ENCODE measurements at regions of chr2 and their contacts with region 1.

Region 1: GRCh38 chr2:7788736-7789135 is 871.5 kb downstream of the RNF144A start:
- DNase-seq: no peak
- H3K4me3 ChIP-seq: no peak overlapping the region
- H3K27ac ChIP-seq: no peak overlapping the region
- H3K4me1 ChIP-seq: no peaks in the 10 kb centered on the region
- H3K27me3 ChIP-seq: no peaks in the 10 kb centered on the region
- CTCF ChIP-seq: no peak
- POLR2A ChIP-seq: no peak

Region 2: DNA sequence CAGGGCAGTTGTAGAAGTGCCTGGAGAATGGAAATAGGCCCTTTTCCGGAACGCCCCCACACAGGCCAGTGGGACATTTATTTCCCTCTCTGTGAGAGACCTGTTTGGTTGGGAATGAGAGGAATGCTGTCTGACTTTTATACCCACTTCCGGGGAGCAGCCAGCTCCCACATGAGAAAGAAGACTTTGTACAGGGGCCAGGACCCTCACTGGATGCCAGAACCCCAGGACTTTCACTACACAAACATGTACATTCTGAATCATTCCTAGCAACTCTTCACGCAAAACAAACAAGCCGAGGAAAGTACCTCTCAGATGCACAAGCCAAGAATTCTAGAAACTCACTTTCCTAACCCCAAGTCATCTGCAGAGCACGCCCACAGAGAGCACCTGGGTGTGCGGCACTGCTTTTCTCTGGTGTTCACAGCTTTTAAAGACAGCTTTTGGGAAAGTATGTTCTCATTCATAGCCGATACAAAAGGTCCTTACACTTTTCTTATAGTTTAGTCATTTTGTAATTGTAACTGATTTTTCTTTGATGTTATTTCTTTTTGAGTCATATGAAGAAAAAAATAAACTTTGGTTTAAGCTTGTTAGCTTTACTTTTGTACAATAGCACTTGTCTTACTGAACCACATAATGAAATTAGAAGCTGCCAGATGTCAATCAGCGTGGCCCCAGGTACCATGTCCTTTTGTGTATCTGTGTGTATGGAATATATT is 37.0 kb after region 1 on chr2:
- intact Hi-C with region 1: no loop called
- DNase-seq: peak in 1 of 2 donors; percentile 86
- H3K4me3 ChIP-seq: no peak overlapping the region
- H3K27ac ChIP-seq: peak overlapping the region; percentile 78 to 79
- H3K4me1 ChIP-seq: no peaks in the 10 kb centered on the region
- H3K27me3 ChIP-seq: no peaks in the 10 kb centered on the region
- CTCF ChIP-seq: no peak
- POLR2A ChIP-seq: no peak

Region 3: GRCh38 chr2:9152975-9153642 is 1364.4 kb after region 1 on chr2:
- intact Hi-C with region 1: loop called (anchors 10 kb)
- DNase-seq: no peak
- H3K4me3 ChIP-seq: peak overlapping the region in 1 of 3 donors; percentile 21
- H3K27ac ChIP-seq: peak overlapping the region; percentile 56 to 62
- H3K4me1 ChIP-seq: peaks cover 0 to 13% of the 10 kb centered on the region in 2 donors
- H3K27me3 ChIP-seq: no peaks in the 10 kb centered on the region
- CTCF ChIP-seq: no peak
- POLR2A ChIP-seq: no peak